ENCODE measurements at regions of chr5 and their contacts with region 1.

Region 1: DNA sequence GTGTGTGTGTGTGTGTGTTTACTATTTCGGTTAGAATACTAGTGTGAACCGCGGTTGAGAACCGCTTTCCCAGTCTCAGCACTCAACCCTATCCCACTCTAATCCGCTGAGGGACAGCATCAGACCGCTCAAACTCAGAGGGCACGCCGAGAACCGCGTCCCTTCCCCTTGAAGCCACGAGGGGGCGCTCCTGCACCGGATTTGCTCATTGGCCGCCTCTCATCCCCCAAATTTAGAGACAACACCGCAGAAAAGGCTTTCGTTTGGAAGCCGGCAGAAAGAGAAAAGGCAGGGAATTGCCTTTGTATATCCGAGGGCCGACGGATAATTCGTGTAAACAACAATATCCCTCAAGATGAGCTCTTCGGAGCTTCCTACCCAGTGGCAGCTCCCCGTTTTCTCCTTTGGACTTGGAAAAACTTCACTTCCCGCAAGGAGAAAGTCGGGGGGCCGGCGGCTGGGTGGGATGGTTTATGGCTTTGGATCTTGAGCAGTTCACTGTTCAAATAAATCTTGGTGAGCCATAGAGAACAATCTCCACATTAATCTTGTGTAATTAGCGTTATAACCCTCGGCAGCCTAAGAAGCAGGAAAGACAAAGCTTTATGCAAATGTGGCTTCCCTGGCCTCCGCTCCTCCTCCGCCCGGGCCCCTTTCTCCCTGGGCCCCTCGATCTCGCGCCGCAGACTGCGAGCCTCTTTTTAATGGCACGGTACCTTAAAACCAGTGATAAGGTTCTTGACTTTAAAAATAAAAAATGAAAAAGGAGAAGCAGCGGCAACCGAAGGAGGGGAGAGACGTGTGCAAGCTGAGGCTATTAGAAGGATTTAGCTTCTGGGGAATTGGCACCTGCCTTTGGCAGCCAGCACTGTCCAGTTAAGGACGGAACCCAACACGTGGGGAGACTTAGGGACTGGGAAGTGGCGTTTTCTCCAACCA is 296.8 kb downstream of the PARP8 start:
- DNase-seq: peak; percentile 40 to 92 (median 74)
- H3K4me3 ChIP-seq: peak overlapping the region in 2 of 4 donors; percentile 30 to 36
- H3K27ac ChIP-seq: peak overlapping the region in 1 of 5 donors; percentile 29
- H3K4me1 ChIP-seq: peaks cover 10 to 27% of the 10 kb centered on the region in 2 donors
- H3K27me3 ChIP-seq: peaks cover 48% of the 10 kb centered on the region
- CTCF ChIP-seq: peak; percentile 74 to 90 (median 86)
- POLR2A ChIP-seq: no peak

Region 2: DNA sequence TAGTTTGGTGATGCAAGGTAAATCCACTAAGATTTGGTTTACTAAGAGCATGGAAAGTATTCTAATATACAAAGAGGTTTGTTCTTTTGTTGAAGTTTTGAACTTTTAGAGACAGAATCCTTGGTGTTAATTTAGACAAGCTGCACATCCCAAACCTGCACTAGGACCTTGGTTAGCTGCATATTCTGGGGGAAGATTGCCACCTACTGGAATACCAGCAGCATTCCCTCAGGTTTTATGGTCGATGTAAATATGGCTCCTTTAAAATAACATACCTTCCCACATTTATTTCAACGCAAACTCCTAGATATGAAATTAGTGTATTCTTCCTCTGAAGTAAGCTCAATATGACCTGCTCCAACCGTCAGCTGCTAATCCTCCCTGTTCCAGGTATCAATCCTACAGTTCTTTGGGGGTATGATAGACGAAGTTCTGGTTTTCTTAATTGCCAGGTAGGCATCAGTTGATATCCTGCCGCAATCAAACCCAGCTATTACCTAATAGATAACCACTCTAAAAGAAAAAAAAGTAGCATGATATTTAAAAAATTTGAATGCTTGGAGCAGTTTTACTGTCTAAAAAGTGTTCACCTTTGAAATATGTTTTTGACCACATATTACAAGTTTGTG is 1044.1 kb after region 1 on chr5:
- intact Hi-C with region 1: loop called (anchors 5 to 10 kb)
- DNase-seq: peak in 4 of 7 donors; percentile 19 to 36 (median 29)
- H3K4me3 ChIP-seq: no peak overlapping the region
- H3K27ac ChIP-seq: no peak overlapping the region
- H3K4me1 ChIP-seq: no peaks in the 10 kb centered on the region
- H3K27me3 ChIP-seq: no peaks in the 10 kb centered on the region
- CTCF ChIP-seq: peak; percentile 41 to 66 (median 58)
- POLR2A ChIP-seq: no peak

Region 3: DNA sequence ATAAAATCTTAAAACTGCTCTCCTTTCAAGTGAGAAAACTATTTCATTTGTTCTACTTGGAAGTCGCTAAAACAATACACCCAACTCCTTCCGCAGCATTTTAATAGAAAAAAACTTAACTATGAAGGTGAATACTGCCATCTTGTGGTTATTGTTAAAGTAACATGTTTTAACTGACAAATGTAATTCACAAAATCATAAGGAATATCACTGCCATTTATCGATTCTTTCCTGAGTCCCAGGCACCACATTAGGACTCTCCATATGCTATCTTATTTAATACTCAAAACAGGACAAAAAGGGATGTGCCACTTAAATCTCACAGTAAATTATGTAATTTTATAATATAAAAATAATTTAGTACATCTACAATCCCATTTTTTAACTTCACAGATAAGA is 1694.0 kb after region 1 on chr5:
- intact Hi-C with region 1: loop called in 1 of 2 experiments (anchors 5 kb)
- DNase-seq: no peak
- H3K4me3 ChIP-seq: no peak overlapping the region
- H3K27ac ChIP-seq: no peak overlapping the region
- H3K4me1 ChIP-seq: no peaks in the 10 kb centered on the region
- H3K27me3 ChIP-seq: no peaks in the 10 kb centered on the region
- CTCF ChIP-seq: peak; percentile 38 to 72 (median 59)
- POLR2A ChIP-seq: no peak

Measured in adrenal gland (tissue), 19 donors.